CD8-positive, alpha-beta T cell (primary cell): ENCODE measurements at regions of chr16 and their contacts with region 1.

Region 1: GRCh38 chr16:88633684-88634140 is 4.7 kb upstream of the IL17C start:
- DNase-seq: peak in 8 of 9 experiments; percentile 40 to 91 (median 72)
- ATAC-seq: peak; percentile 54
- H3K4me3 ChIP-seq: peak overlapping the region; percentile 61 to 67
- H3K4me3 Mint-ChIP-seq: peak overlapping the region; percentile 80
- H3K27ac ChIP-seq: peak overlapping the region; percentile 50 to 78
- H3K27ac Mint-ChIP-seq: peak overlapping the region; percentile 87
- H3K4me1 ChIP-seq: peaks cover 42% of the 10 kb centered on the region
- H3K4me1 Mint-ChIP-seq: peaks cover 31% of the 10 kb centered on the region
- H3K27me3 ChIP-seq: peaks cover 0 to 8% of the 10 kb centered on the region in 2 experiments
- H3K27me3 Mint-ChIP-seq: peaks cover 5% of the 10 kb centered on the region
- CTCF ChIP-seq: no peak

Region 2: DNA sequence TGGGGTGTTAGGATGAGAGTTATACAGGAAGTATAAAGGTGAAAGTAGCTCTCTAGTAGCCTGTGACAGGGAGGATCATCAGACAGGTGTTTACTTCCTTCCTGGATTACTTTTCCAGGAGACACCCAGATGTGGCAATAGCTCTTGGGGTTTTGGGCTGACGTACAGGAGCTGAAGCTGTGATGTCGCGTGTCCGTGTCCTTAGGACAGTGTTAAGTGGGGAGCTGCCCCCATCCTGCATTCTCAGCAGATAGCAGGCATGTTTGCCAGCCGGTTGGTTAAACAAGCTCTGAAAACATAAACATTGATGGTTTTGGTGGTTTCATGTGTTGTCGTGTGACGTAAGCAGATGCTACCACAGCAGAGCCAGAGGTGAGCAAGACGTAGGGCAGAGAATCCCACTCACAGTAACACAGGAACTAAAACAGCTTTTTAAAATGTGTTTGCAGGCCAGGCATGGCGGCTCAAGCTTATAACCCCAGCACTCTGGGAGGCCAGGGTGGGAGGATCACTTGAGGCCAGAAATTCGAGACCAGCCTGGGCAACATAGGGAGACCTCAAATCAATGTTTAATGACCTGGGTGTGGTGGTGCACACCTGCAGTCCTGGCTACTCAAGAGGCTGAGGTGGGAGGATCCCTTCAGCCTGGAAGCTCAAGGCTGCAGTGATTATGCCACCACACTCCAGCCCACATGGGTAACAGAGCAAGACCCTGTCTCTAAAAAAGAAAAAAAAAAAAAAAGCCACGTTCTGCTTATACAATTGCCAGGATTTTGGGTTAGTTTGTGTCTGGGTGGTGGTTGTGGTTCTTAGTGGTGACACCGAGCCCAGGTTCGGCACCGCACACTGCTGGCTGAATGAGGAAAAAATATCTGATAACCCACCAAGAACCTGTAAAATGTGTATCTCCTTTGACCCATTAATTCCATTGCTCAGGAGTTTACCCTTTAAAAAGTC is 13.6 kb before region 1 on chr16:
- CTCF ChIA-PET with region 1: interaction called, 3 read pairs
- POLR2A ChIA-PET with region 1: interaction called, 13 read pairs
- intact Hi-C with region 1: loop called (anchors 1 kb)
- DNase-seq: peak; percentile 58 to 97 (median 76)
- ATAC-seq: peak; percentile 85
- H3K4me3 ChIP-seq: no peak overlapping the region
- H3K4me3 Mint-ChIP-seq: peak overlapping the region; percentile 36
- H3K27ac ChIP-seq: peak overlapping the region; percentile 69 to 89
- H3K27ac Mint-ChIP-seq: peak overlapping the region; percentile 99
- H3K4me1 ChIP-seq: peaks cover 28% of the 10 kb centered on the region
- H3K4me1 Mint-ChIP-seq: peaks cover 25% of the 10 kb centered on the region
- H3K27me3 ChIP-seq: no peaks in the 10 kb centered on the region
- H3K27me3 Mint-ChIP-seq: no peaks in the 10 kb centered on the region
- CTCF ChIP-seq: no peak

Region 3: DNA sequence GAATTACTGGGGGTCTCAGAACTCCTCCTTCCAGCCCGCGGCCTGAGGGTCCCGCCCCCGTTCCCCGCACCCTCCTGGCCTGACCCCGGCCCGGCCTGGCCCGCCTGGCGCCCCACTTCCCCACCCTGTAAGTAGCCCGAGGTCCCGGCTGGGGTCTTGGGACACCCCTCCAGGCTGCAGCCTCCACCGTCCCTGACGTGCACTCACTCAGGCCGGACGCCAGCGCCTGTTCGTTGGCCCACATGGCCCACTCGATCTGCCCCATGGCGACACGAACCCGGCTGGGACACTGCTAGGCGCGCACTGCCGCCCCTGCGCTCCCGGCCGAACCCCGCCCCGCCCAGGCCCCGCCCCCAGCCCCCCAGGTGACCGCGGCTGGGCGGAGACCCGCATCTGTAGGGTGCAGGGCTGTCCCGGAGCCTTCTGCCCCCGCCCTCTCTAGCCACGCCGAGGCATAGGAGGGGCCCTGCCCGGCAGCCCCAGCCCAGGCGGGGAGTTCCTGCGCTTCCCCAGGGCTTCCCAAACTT is 17.1 kb after region 1 on chr16 and contains the start of gene CYBA:
- CTCF ChIA-PET with region 1: interaction called, 3 read pairs
- POLR2A ChIA-PET with region 1: interaction called, 5 read pairs
- intact Hi-C with region 1: loop called in 1 of 2 experiments (anchors 2 kb)
- DNase-seq: peak; percentile 73 to 92 (median 82)
- ATAC-seq: peak; percentile 80
- H3K4me3 ChIP-seq: peak within 1 kb of the TSS; percentile 90 to 95
- H3K4me3 Mint-ChIP-seq: peak within 1 kb of the TSS; percentile 91
- H3K27ac ChIP-seq: peak within 1 kb of the TSS; percentile 91 to 94
- H3K27ac Mint-ChIP-seq: peak within 1 kb of the TSS; percentile 94
- H3K4me1 ChIP-seq: peaks cover 33% of the 10 kb centered on the region
- H3K4me1 Mint-ChIP-seq: peaks cover 21% of the 10 kb centered on the region
- H3K27me3 ChIP-seq: no peaks in the 10 kb centered on the region
- H3K27me3 Mint-ChIP-seq: no peaks in the 10 kb centered on the region
- CTCF ChIP-seq: no peak
- total RNA-seq, gene CYBA: 312 to 320 TPM

Region 4: GRCh38 chr16:88700636-88701482 is 67.1 kb after region 1 on chr16:
- CTCF ChIA-PET with region 1: no interaction called
- POLR2A ChIA-PET with region 1: interaction called, 7 read pairs
- intact Hi-C with region 1: loop called (anchors 1 to 5 kb)
- DNase-seq: peak; percentile 92 to 98 (median 97)
- ATAC-seq: peak; percentile 65
- H3K4me3 ChIP-seq: peak overlapping the region; percentile 74 to 95
- H3K4me3 Mint-ChIP-seq: peak overlapping the region; percentile 90
- H3K27ac ChIP-seq: peak overlapping the region; percentile 83 to 91
- H3K27ac Mint-ChIP-seq: peak overlapping the region; percentile 98
- H3K4me1 ChIP-seq: peaks cover 56% of the 10 kb centered on the region
- H3K4me1 Mint-ChIP-seq: peaks cover 61% of the 10 kb centered on the region
- H3K27me3 ChIP-seq: no peaks in the 10 kb centered on the region
- H3K27me3 Mint-ChIP-seq: no peaks in the 10 kb centered on the region
- CTCF ChIP-seq: no peak